Mucosa of descending colon (tissue), 3 donors: ENCODE measurements at regions of chr6 and their contacts with region 1.

Region 1: DNA sequence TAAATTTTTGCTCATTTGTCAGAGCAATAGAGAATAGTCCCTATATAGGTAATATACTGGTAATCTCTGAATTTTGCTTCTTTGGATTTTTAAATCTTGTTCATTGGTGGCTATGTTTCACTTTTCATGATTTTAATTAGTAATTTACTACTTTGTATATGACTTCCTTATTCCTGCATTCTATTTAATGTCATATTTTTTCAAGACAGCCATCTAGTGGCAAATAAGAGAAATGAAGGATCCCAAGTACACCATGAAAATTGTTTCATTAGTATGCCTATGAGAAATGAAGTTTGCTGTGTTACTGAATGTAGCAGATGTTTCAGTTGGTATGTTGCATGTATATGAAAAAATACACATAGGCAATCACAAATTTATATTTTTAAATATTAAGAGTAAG is 82.4 kb downstream of the ZNF292 start:
- DNase-seq: no peak
- ATAC-seq: no peak
- H3K4me3 ChIP-seq: no peak overlapping the region
- H3K4me1 ChIP-seq: no peaks in the 10 kb centered on the region
- CTCF ChIP-seq: peak; percentile 10

Region 2: DNA sequence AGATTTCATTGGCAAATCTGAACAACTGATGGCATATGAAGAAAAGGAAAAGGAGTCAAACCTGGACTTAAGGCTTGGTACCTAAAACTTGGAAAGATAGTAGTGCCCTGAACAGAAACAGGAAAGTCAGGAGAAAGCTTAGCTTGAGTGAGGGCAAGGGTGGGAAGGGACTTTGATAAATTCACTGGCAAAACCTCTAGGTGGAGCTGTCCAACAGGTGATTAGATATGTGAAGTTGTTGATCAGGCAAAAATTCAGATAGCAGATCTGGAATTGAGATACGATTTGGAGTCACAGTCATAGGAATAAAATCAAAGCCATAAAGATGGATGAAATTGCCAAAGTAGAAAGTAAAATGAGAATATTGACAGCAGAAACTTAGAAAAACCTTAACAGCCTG is 98.6 kb before region 1 on chr6:
- intact Hi-C with region 1: loop called in 1 of 2 experiments (anchors 5 kb)
- DNase-seq: peak in 1 of 3 donors; percentile 68
- ATAC-seq: peak; percentile 82
- H3K4me3 ChIP-seq: no peak overlapping the region
- H3K4me1 ChIP-seq: no peaks in the 10 kb centered on the region
- CTCF ChIP-seq: peak; percentile 61